ENCODE measurements at regions of chr1 and their contacts with region 1.

Region 1: GRCh38 chr1:24861821-24862727 is 68.0 kb downstream of the RUNX3 start:
- DNase-seq: no peak
- H3K4me3 Mint-ChIP-seq: no peak overlapping the region
- H3K27ac Mint-ChIP-seq: no peak overlapping the region
- H3K4me1 Mint-ChIP-seq: peaks cover 18% of the 10 kb centered on the region
- H3K27me3 Mint-ChIP-seq: peaks cover 15% of the 10 kb centered on the region
- CTCF ChIP-seq: no peak

Region 2: GRCh38 chr1:24421502-24421901 is 440.6 kb before region 1 on chr1:
- CTCF ChIA-PET with region 1: no interaction called
- intact Hi-C with region 1: no loop called
- DNase-seq: no peak
- H3K4me3 Mint-ChIP-seq: no peak overlapping the region
- H3K27ac Mint-ChIP-seq: no peak overlapping the region
- H3K4me1 Mint-ChIP-seq: peaks cover 14% of the 10 kb centered on the region
- H3K27me3 Mint-ChIP-seq: no peaks in the 10 kb centered on the region
- CTCF ChIP-seq: no peak

Region 3: GRCh38 chr1:25103164-25103795 is 241.2 kb after region 1 on chr1:
- CTCF ChIA-PET with region 1: no interaction called
- intact Hi-C with region 1: loop called (anchors 5 kb)
- DNase-seq: no peak
- H3K4me3 Mint-ChIP-seq: no peak overlapping the region
- H3K27ac Mint-ChIP-seq: no peak overlapping the region
- H3K4me1 Mint-ChIP-seq: peaks cover 8% of the 10 kb centered on the region
- H3K27me3 Mint-ChIP-seq: peaks cover 78% of the 10 kb centered on the region
- CTCF ChIP-seq: no peak

Measured in Calu3 (cell line).